A549 (cell line): ENCODE measurements at regions of chr10 and their contacts with region 1.

Region 1: GRCh38 chr10:124125447-124126116 is 32.2 kb upstream of the CHST15 start:
- DNase-seq: peak; percentile 30 to 58
- ATAC-seq: peak; percentile 54 to 83; a peak in 4 of 6 replicates
- H3K4me3 ChIP-seq: no peak overlapping the region
- H3K27ac ChIP-seq: no peak overlapping the region
- H3K4me1 ChIP-seq: no peaks in the 10 kb centered on the region
- CTCF ChIP-seq: peak; percentile 38
- EP300 ChIP-seq: no peak
- POLR2A ChIP-seq: no peak
- RAD21 ChIP-seq: 0 out of 5 replicates have a peak, but pooled peaks of 1 of the 2 experiments have one; percentile 16

Region 2: DNA sequence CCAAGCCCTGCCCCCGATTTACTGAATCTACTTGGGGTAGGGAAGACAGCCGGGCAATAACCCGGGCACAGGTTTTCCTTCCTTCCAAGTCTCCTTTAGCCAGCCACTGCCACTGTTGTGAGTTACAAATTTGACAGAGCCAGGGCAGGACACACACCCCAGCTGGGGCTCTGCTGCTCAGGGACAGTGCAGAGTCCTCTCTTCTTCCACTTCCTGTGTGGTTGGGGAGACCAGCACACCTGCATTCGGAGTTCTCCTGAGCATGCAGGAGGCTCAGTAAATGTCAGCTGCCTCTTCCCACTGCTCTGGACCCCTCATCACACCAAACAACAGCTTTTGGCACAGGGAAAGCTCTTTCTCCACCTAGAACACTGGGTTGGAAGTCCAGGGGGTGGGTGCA is 53.5 kb before region 1 on chr10:
- CTCF ChIA-PET with region 1: no interaction called
- POLR2A ChIA-PET with region 1: no interaction called
- DNase-seq: no peak
- ATAC-seq: no peak
- H3K4me3 ChIP-seq: no peak overlapping the region
- H3K27ac ChIP-seq: no peak overlapping the region
- H3K4me1 ChIP-seq: no peaks in the 10 kb centered on the region
- CTCF ChIP-seq: no peak
- EP300 ChIP-seq: no peak
- POLR2A ChIP-seq: no peak
- RAD21 ChIP-seq: no peak

Region 3: GRCh38 chr10:124106241-124106879 is 19.2 kb before region 1 on chr10:
- CTCF ChIA-PET with region 1: interaction called, 15 read pairs
- POLR2A ChIA-PET with region 1: interaction called, 3 read pairs
- DNase-seq: peak; percentile 44 to 55
- ATAC-seq: peak; percentile 42 to 71; a peak in 3 of 6 replicates
- H3K4me3 ChIP-seq: no peak overlapping the region
- H3K27ac ChIP-seq: peak overlapping the region; percentile 50 to 80
- H3K4me1 ChIP-seq: peaks cover 27% of the 10 kb centered on the region
- CTCF ChIP-seq: no peak
- EP300 ChIP-seq: no peak
- POLR2A ChIP-seq: no peak
- RAD21 ChIP-seq: peak in 1 of 2 experiments; percentile 5; a peak in 1 of 5 replicates

Region 4: DNA sequence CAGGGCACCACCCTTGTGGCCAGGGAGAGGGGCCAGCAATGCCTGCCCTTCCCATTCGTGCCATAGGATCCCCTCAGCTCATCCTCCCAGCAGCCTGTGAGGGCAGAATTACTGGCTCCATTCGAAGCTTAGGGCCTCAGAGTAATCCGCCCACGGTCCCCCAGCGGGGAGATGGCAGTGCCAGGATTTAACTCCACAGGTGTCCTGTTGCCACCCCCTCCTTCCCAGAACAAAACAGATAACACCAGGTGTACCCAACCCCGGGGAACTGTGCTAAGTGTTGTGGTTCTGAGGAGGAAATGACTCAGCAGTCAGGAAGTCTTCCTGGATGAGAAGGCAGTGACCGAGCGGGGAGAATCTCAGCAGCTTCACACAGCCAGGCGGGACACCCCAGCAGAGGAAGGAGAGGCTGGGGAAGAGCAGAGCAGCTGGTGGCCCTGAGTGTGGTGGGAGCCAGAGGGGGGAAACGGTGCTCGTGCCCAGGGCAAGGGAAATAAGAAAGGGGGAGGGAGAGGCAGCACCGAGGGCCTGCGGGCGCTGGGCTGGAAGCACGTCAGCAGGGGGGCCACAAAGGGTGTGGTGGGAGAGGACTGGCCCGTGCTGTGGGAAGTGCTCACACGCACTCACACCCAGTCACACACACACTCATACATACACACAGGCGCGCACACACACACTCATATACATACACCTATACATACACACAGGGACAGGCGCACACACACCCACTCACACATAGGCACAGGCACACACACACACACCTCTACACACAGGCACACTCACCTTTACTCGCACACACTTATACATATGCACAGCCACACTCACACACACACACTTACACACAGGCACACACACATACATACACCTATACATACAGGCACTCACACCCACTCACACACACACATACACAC is 27.6 kb after region 1 on chr10:
- CTCF ChIA-PET with region 1: interaction called, 4 read pairs
- POLR2A ChIA-PET with region 1: interaction called, 13 read pairs
- DNase-seq: peak; percentile 89 to 97
- ATAC-seq: peak; percentile 83 to 90
- H3K4me3 ChIP-seq: peak overlapping the region; percentile 17; the same call in 2 of the 3 replicates
- H3K27ac ChIP-seq: peak overlapping the region; percentile 95 to 97
- H3K4me1 ChIP-seq: peaks cover 36% of the 10 kb centered on the region
- CTCF ChIP-seq: no peak
- EP300 ChIP-seq: peak in 1 of 2 experiments; percentile 54; a peak in 1 of 5 replicates
- POLR2A ChIP-seq: no peak; the same call in 1 of the 2 replicates
- RAD21 ChIP-seq: peak in 1 of 2 experiments; percentile 10; a peak in 1 of 5 replicates

Region 5: GRCh38 chr10:124211921-124212320 is 86.3 kb after region 1 on chr10:
- CTCF ChIA-PET with region 1: no interaction called
- POLR2A ChIA-PET with region 1: no interaction called
- DNase-seq: no peak
- ATAC-seq: no peak
- H3K4me3 ChIP-seq: no peak overlapping the region
- H3K27ac ChIP-seq: no peak overlapping the region
- H3K4me1 ChIP-seq: no peaks in the 10 kb centered on the region
- CTCF ChIP-seq: no peak
- EP300 ChIP-seq: no peak
- POLR2A ChIP-seq: no peak
- RAD21 ChIP-seq: no peak